GM10248 (cell line): ENCODE measurements at regions of chr5 and their contacts with region 1.

Region 1: DNA sequence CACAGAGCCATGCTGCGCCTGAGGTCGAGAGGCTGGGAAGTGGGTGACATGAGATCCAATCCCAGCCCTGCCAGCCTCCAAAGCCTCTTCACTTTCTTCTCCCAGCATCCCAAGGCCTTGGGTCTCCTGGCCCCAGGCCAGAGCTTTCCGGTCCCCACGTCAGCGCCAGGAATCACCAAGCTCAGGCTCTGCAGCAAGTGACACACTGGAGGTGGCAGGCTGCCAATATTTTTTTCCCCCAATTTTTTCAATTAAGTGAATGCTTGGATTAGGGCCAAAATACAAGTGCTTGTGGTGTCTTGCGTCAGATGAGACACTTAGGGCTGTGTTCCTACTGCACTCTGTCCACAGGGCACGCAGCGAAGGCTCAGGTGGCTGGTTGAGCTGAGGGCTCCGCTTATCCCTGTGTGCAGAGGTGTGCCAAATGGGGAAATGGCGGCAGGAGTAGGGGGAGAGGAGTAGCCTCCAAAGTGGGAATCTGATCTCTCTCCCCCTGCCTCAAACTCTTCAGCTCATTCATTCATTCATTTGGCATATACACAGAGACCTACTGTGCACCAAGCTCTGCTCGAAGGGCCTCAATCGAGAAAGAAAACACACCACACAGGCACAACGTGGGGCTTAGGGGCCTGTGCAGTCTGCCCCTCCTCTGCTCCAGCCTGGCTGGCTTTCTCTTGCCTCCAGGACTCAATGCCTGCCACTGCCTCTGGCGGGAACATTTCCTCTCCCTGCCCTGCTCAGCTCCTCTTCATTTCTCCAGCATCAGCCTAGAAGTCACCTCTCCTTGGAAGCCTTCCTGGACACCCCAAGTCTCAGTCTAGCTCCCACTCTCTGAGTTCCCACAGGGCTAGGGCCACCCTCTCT is 16.6 kb downstream of the SH3PXD2B start:
- DNase-seq: no peak
- CTCF ChIP-seq: no peak

Region 2: DNA sequence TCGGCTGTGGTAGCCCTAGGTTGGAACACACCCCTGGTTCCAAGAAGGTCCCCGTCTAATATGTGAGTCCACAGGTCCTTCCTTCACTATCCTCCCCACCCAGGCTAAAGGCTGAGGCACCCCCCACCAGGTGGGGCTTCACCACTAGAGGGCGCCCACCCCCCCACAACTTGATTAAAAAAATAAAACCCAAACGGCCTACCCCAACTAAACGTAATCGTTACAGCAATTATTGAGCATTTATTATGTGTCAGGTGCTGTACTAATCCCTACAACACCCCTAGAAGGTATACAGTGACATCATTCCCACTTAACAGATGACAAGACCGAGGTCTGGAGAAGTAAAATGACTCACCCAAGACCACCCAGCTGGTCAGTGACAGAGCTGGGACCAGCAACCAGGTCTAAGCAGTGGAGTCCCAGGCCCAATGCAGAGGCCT is 953.2 kb before region 1 on chr5:
- CTCF ChIA-PET with region 1: no interaction called
- POLR2A ChIA-PET with region 1: no interaction called
- DNase-seq: peak; percentile 72
- CTCF ChIP-seq: peak; percentile 63

Region 3: DNA sequence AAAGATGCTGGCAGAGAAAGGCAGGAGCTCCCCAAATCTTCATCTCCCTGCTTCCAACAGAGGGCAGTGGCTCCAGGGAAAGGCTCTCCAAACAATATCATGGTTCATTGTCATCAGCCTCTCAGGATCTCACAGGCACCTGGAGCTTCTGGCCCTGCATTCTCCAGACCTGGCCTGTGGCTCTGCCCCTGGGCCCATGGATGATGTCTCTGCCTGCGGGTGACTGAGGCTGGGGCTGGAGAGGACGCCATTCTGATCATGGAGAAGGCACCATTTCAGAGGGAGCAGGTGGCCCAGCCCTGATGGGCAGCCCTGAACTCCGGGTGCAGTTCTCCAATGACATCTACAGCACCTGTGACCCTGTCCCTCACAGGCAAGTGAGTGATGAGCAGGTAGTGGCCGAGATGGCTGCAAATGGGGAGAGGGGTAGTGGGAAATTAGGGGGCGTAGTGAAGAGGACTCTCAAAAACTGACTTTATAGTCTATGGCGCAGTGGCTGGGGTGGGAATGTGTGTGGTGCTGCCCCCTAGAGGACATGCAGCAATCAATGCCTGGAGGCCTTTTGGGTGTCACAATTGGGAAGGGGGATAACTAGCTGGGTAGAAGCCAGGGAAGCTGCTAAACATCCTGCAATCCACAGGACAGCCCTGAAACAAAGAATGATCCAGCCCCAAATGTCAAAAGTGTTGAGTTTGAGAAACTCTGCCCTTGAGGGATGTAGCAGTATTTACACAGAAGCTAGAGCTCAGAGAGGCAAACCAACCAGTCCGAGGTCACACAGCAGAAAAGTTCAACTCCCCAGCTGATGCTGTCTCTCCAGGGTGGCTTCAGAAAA is 13.4 kb after region 1 on chr5:
- CTCF ChIA-PET with region 1: interaction called, 14 read pairs
- POLR2A ChIA-PET with region 1: no interaction called
- DNase-seq: peak; percentile 46
- CTCF ChIP-seq: peak; percentile 48